A673 (cell line): ENCODE measurements at regions of chr3 and their contacts with region 1.

Region 1: GRCh38 chr3:87126154-87126715 is 100.9 kb upstream of the CHMP2B start:
- DNase-seq: no peak
- H3K4me3 ChIP-seq: no peak overlapping the region
- H3K27ac ChIP-seq: no peak overlapping the region
- H3K4me1 ChIP-seq: no peaks in the 10 kb centered on the region
- H3K27me3 ChIP-seq: no peaks in the 10 kb centered on the region
- CTCF ChIP-seq: no peak

Region 2: GRCh38 chr3:87101861-87102625 is 24.2 kb before region 1 on chr3:
- CTCF ChIA-PET with region 1: no interaction called
- POLR2A ChIA-PET with region 1: no interaction called
- intact Hi-C with region 1: loop called (anchors 1 kb)
- DNase-seq: no peak
- H3K4me3 ChIP-seq: no peak overlapping the region
- H3K27ac ChIP-seq: no peak overlapping the region
- H3K4me1 ChIP-seq: no peaks in the 10 kb centered on the region
- H3K27me3 ChIP-seq: no peaks in the 10 kb centered on the region
- CTCF ChIP-seq: no peak